Ascending aorta (tissue), 2 donors: ENCODE measurements at regions of chr1 and their contacts with region 1.

Region 1: GRCh38 chr1:1703796-1704195 is 11.2 kb upstream of the SLC35E2B start:
- DNase-seq: peak in 1 of 2 donors; percentile 60
- H3K4me3 ChIP-seq: no peak overlapping the region
- H3K27ac ChIP-seq: no peak overlapping the region
- H3K4me1 ChIP-seq: no peaks in the 10 kb centered on the region
- H3K27me3 ChIP-seq: no peaks in the 10 kb centered on the region
- CTCF ChIP-seq: no peak

Region 2: DNA sequence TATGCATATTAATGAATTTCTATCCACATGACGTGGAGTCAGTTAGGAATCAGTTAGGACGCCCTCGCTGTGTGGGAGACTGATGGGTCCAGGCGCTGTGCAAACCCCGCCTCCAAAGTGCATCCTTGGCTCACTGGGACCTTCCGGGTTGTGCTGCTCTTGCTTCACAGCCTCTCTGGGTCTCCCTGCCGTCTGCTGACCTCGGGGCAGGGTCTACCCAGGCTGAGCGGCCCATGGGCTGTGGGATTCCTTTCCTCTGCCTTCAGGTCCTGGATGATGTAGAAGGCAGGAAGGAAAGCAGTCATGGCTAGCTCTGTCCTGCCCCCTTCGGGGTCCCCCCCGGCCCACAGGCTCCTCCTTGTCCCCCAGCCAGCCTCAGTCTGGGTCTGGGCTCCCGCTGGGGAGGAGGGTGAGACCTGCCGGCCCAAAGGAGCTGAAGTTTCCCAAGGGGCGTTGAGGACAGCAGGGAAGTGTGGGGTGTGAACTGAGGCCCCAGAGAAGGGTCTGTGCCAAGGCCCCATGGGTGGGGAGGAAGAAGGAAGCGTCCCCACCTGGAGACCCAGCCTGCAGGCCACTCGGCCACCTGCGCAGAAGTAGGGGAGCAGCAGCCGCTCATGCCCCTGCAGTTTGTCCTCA is 45.0 kb after region 1 on chr1:
- intact Hi-C with region 1: loop called (anchors 10 kb)
- DNase-seq: no peak
- H3K4me3 ChIP-seq: no peak overlapping the region
- H3K27ac ChIP-seq: no peak overlapping the region
- H3K4me1 ChIP-seq: no peaks in the 10 kb centered on the region
- H3K27me3 ChIP-seq: no peaks in the 10 kb centered on the region
- CTCF ChIP-seq: no peak